Left colon (tissue), 2 donors: ENCODE measurements at regions of chr7 and their contacts with region 1.

Region 1: GRCh38 chr7:94449148-94449725 is 54.5 kb downstream of the COL1A2 start:
- DNase-seq: no peak
- ATAC-seq: peak; percentile 69

Region 2: GRCh38 chr7:94276795-94277194 is 172.4 kb before region 1 on chr7:
- intact Hi-C with region 1: no loop called
- DNase-seq: no peak
- ATAC-seq: no peak

Region 3: GRCh38 chr7:94657771-94658693 is 208.8 kb after region 1 on chr7:
- intact Hi-C with region 1: loop called in 1 of 2 experiments (anchors 10 kb)
- DNase-seq: peak; percentile 94 to 96
- ATAC-seq: peak; percentile 87

Region 4: GRCh38 chr7:95246831-95247370 is 797.7 kb after region 1 on chr7:
- intact Hi-C with region 1: loop called in 1 of 2 experiments (anchors 10 kb)
- DNase-seq: peak; percentile 25 to 47
- ATAC-seq: peak; percentile 91

Region 5: DNA sequence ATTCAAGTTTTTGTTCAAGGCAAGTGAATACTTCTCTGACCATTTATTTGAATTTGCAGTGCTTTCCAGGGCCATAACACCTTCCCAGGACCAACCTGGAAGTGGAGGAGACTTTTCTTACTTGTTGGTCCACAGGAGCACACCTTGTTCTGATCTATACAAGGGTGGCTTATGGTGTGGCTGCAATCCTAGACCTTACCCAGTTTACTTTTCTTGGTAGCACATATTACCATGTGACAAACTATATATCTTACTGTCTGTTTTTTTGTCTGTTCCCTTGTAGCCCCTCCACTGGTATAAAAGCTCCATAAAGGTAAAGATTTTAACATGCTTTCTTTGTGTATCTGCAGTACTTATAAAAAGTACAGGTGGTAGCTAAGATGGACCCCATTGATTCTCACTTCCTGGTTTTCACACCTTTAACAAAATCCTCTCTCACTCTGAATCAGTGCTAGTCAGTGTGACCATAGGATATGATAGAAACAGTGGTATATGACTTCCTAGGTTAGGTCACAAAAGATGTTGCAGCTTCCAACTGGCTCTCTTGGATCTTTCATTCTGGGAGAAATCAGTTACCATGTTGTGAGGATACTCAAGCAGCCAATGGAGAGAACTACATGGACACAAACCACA is 1030.9 kb after region 1 on chr7:
- intact Hi-C with region 1: loop called in 1 of 2 experiments (anchors 10 kb)
- DNase-seq: no peak
- ATAC-seq: no peak